Transverse colon (tissue), 4 donors: ENCODE measurements at regions of chr10 and their contacts with region 1.

Region 1: GRCh38 chr10:62244780-62245467 is 23.7 kb downstream of the RTKN2 start:
- DNase-seq: peak; percentile 54
- H3K4me3 ChIP-seq: peak overlapping the region in 1 of 4 donors; percentile 14
- H3K27ac ChIP-seq: peak overlapping the region in 2 of 4 donors; percentile 4 to 64
- H3K4me1 ChIP-seq: peaks cover 0 to 20% (median 8%) of the 10 kb centered on the region in 4 donors
- H3K27me3 ChIP-seq: no peaks in the 10 kb centered on the region
- CTCF ChIP-seq: peak; percentile 80 to 92 (median 86)
- EP300 ChIP-seq: no peak
- POLR2A ChIP-seq: no peak

Region 2: GRCh38 chr10:61750929-61751471 is 493.9 kb before region 1 on chr10:
- in situ Hi-C with region 1: loop called in 1 of 4 experiments (anchors 25 kb)
- intact Hi-C with region 1: no loop called
- DNase-seq: peak; percentile 88
- H3K4me3 ChIP-seq: no peak overlapping the region
- H3K27ac ChIP-seq: peak overlapping the region; percentile 45 to 66 (median 64)
- H3K4me1 ChIP-seq: peaks cover 14 to 26% (median 19%) of the 10 kb centered on the region in 4 donors
- H3K27me3 ChIP-seq: no peaks in the 10 kb centered on the region
- CTCF ChIP-seq: peak; percentile 65 to 84 (median 72)
- EP300 ChIP-seq: no peak
- POLR2A ChIP-seq: no peak

Region 3: GRCh38 chr10:61903221-61903927 is 341.6 kb before region 1 on chr10:
- in situ Hi-C with region 1: loop called in 3 of 4 experiments (anchors 10 kb)
- intact Hi-C with region 1: no loop called
- DNase-seq: peak; percentile 76
- H3K4me3 ChIP-seq: peak overlapping the region; percentile 61 to 90 (median 79)
- H3K27ac ChIP-seq: peak overlapping the region; percentile 98
- H3K4me1 ChIP-seq: peaks cover 10 to 47% (median 31%) of the 10 kb centered on the region in 4 donors
- H3K27me3 ChIP-seq: no peaks in the 10 kb centered on the region
- CTCF ChIP-seq: peak in 4 of 5 experiments; percentile 19 to 38 (median 30)
- EP300 ChIP-seq: no peak
- POLR2A ChIP-seq: peak; percentile 72